ENCODE measurements at regions of chr12 and their contacts with region 1.

Region 1: GRCh38 chr12:389139-390096 is at the start of gene KDM5A:
- DNase-seq: peak; percentile 83
- ATAC-seq: peak; percentile 92
- H3K4me3 Mint-ChIP-seq: peak within 1 kb of the TSS; percentile 95
- H3K27ac Mint-ChIP-seq: peak within 1 kb of the TSS; percentile 97
- H3K4me1 Mint-ChIP-seq: peaks cover 46% of the 10 kb centered on the region
- H3K27me3 Mint-ChIP-seq: no peaks in the 10 kb centered on the region
- CTCF ChIP-seq: no peak
- total RNA-seq, gene KDM5A: 113 and 135 TPM in 2 replicates

Region 2: GRCh38 chr12:286531-287300 is 102.7 kb before region 1 on chr12:
- CTCF ChIA-PET with region 1: no interaction called
- POLR2A ChIA-PET with region 1: interaction called, 10 read pairs
- intact Hi-C with region 1: no loop called
- DNase-seq: no peak
- ATAC-seq: no peak
- H3K4me3 Mint-ChIP-seq: no peak overlapping the region
- H3K27ac Mint-ChIP-seq: no peak overlapping the region
- H3K4me1 Mint-ChIP-seq: peaks cover 5% of the 10 kb centered on the region
- H3K27me3 Mint-ChIP-seq: no peaks in the 10 kb centered on the region
- CTCF ChIP-seq: no peak

Region 3: DNA sequence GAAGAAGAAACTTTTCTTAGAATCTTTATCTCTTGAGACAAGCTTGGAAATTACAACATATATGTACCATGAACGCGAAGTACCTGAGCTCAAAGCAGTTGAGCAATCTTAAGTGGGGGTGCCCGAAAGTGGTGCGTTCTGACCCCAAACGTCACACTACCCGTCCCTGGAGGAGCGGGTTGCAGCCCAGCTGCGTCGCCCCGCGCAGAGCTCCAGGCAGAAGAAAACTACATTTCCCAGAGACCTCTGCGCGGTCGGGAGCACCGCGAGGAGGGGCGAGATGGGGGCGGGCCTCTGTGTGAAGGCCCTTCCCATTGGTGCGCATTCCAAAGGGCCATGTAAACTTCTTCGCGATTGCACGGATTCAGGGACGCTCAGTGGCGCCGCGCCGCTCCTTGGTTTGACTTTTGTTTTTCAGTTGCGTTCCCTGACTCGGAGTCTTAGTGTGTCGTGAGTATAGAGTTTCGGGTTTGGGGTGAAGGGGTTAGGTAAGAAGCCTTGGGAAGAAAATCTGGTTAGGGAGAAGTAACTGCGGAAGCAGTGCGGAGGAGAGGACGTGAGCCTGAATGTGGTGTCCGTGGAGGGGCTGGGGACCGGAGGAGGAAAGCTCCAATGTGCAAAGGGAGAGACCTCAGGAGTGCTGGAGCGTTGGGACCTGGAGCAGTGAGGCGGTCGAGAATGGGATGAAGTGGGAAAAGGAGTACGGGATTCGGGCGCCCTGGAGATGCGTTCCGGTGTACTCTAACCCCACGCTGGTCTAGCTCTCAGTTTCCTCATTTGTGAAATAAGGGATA is 12.0 kb after region 1 on chr12 and contains the start of gene CCDC77:
- CTCF ChIA-PET with region 1: interaction called, 8 read pairs
- POLR2A ChIA-PET with region 1: interaction called, 95 read pairs
- intact Hi-C with region 1: loop called (anchors 1 kb)
- DNase-seq: peak; percentile 92
- ATAC-seq: peak; percentile 100
- H3K4me3 Mint-ChIP-seq: no peak within 1 kb of the TSS
- H3K27ac Mint-ChIP-seq: no peak within 1 kb of the TSS
- H3K4me1 Mint-ChIP-seq: no peaks in the 10 kb centered on the region
- H3K27me3 Mint-ChIP-seq: no peaks in the 10 kb centered on the region
- CTCF ChIP-seq: no peak
- total RNA-seq, gene CCDC77: 11.0 and 11.2 TPM in 2 replicates

Region 4: GRCh38 chr12:779745-780734 is 390.6 kb after region 1 on chr12:
- CTCF ChIA-PET with region 1: no interaction called
- POLR2A ChIA-PET with region 1: no interaction called
- intact Hi-C with region 1: no loop called
- DNase-seq: no peak
- ATAC-seq: no peak
- H3K4me3 Mint-ChIP-seq: peak overlapping the region; percentile 29
- H3K27ac Mint-ChIP-seq: no peak overlapping the region
- H3K4me1 Mint-ChIP-seq: peaks cover 68% of the 10 kb centered on the region
- H3K27me3 Mint-ChIP-seq: no peaks in the 10 kb centered on the region
- CTCF ChIP-seq: no peak

Region 5: DNA sequence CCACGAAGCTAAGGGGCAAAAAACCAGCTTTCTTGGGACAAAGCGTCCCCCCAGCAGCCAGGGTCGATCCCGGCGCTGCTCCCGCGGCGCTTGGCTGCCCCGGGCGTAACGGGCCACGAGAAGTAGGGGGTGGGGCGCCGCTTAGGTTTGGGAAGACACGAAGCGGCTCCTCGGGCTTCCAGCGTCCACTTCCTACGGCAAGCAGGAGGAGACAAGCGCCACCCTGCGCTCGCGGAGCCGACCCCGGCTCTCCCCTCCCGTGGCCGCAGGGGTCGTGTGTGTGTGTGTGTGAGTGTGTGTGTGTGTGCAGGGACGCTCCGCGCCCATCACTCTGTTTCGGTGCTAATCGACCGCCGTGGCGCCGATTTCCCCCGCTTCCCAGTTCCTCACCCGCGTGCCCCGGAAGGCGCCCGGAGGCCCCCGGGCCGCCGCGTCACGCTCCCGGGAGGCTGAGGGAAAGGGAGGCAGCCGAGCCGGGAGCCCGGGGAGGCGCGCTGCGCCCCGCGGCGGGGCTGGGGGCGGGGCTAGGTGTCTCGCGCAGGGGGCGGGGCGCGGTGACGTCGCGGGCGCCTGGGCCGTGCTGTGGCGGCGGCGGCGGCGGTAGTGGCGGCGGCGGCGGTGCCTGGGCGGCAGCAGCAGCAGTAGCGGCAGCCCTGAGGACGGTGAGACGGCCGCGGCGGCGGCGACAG is 601.4 kb after region 1 on chr12 and contains the start of gene ERC1:
- CTCF ChIA-PET with region 1: no interaction called
- POLR2A ChIA-PET with region 1: interaction called, 6 read pairs
- intact Hi-C with region 1: loop called (anchors 1 kb)
- DNase-seq: peak; percentile 94
- ATAC-seq: peak; percentile 89
- H3K4me3 Mint-ChIP-seq: peak within 1 kb of the TSS; percentile 95
- H3K27ac Mint-ChIP-seq: peak within 1 kb of the TSS; percentile 91
- H3K4me1 Mint-ChIP-seq: peaks cover 29% of the 10 kb centered on the region
- H3K27me3 Mint-ChIP-seq: no peaks in the 10 kb centered on the region
- CTCF ChIP-seq: no peak
- total RNA-seq, gene ERC1: 51.1 and 57.0 TPM in 2 replicates

Region 6: DNA sequence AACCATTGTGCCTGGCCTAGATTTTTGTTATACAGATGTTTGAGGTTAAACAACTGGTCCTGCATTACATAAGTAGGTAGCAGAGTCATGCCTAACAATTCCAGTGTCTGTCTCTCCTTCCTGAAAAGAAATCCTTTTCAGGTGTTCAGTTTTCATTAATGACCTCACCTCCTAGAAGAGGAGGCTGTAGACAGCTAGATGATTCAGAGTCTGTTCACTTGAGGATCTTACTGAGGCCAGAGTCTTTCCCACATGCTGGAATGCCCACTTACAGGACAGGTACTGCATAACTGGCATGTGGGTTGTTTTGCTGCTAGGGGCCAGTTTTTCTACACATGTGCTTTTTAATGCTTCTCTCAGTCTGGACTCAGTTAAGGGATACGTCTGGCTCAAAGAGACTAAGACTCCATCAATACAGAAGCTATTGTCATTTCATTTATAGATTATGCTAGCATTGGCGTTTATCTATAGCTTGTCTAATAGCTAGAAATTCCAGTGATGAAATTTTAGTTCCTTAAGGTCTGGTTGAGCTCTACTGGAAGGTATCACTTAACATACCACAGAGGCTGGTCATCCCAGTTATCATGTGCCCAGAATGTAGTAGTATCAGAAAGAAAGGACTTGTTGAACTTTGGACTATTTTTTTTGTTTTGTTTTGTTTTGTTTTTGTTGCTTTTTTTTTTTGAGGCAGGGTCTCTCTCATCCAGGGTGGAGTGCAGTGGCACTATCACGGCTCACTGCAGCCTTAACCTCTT is 808.0 kb after region 1 on chr12:
- CTCF ChIA-PET with region 1: no interaction called
- POLR2A ChIA-PET with region 1: no interaction called
- intact Hi-C with region 1: no loop called
- DNase-seq: no peak
- ATAC-seq: no peak
- H3K4me3 Mint-ChIP-seq: no peak overlapping the region
- H3K27ac Mint-ChIP-seq: no peak overlapping the region
- H3K4me1 Mint-ChIP-seq: peaks cover 8% of the 10 kb centered on the region
- H3K27me3 Mint-ChIP-seq: no peaks in the 10 kb centered on the region
- CTCF ChIP-seq: no peak

Region 7: DNA sequence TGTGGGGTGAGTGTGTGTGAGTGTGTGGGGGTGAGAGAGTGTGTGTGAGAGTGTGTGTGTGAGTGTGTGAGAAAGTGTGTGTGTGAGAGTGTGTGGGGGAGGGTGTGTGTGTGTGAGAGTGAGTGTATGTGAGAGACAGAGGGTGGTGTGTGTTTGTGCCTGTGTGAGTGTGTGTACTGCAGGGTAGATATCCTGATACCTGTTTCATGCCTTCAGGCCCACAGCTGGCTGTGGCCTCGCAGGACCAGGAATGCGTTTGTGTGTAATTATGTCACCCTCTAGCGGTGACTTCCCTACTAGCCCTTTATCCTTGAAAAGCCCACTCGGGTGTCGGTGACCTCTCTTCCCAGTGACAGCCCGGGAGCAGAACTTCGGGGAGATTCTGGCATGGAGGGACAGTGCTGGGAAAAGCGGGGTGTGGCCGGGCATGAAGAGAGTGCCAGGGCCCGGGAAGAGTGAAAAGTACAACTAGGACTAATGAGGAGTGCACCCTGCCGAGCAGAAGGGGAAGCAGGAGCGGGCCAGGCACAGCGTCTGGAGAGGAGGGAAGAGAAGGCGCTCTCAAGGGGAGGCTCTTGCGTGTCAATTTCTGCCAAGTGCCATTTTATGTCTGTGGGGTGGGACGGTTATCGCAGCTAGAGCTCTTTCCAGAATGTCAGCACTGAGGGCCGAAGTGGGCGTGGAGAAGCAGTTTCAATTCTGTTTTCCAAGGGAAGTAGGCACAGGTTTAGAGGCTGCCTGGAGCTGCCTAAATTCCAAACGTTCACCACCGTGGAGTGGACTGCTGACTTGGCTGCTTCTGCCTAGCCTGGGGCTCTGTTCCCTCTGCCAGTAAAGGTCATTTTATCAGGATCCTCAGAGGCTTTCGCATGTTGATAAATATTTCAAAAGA is 1216.0 kb after region 1 on chr12:
- CTCF ChIA-PET with region 1: no interaction called
- POLR2A ChIA-PET with region 1: no interaction called
- intact Hi-C with region 1: loop called (anchors 5 kb)
- DNase-seq: peak; percentile 31
- ATAC-seq: peak; percentile 55
- H3K4me3 Mint-ChIP-seq: peak overlapping the region; percentile 91
- H3K27ac Mint-ChIP-seq: peak overlapping the region; percentile 78
- H3K4me1 Mint-ChIP-seq: peaks cover 44% of the 10 kb centered on the region
- H3K27me3 Mint-ChIP-seq: no peaks in the 10 kb centered on the region
- CTCF ChIP-seq: no peak